ENCODE measurements at regions of chr1 and their contacts with region 1.

Region 1: GRCh38 chr1:198937231-198938031 is 298.6 kb downstream of the PTPRC start:
- DNase-seq: peak; percentile 86
- ATAC-seq: peak; percentile 83
- H3K4me3 ChIP-seq: peak overlapping the region; percentile 83
- H3K27ac ChIP-seq: peak overlapping the region; percentile 89
- H3K4me1 ChIP-seq: peaks cover 26% of the 10 kb centered on the region
- H3K27me3 ChIP-seq: no peaks in the 10 kb centered on the region
- CTCF ChIP-seq: no peak

Region 2: GRCh38 chr1:198837278-198838021 is 100.0 kb before region 1 on chr1:
- CTCF ChIA-PET with region 1: no interaction called
- POLR2A ChIA-PET with region 1: interaction called, 3 read pairs
- intact Hi-C with region 1: loop called (anchors 5 kb)
- DNase-seq: peak; percentile 18
- ATAC-seq: peak; percentile 87
- H3K4me3 ChIP-seq: no peak overlapping the region
- H3K27ac ChIP-seq: peak overlapping the region; percentile 55
- H3K4me1 ChIP-seq: peaks cover 18% of the 10 kb centered on the region
- H3K27me3 ChIP-seq: no peaks in the 10 kb centered on the region
- CTCF ChIP-seq: no peak

Region 3: GRCh38 chr1:198892065-198892464 is 45.4 kb before region 1 on chr1:
- CTCF ChIA-PET with region 1: no interaction called
- POLR2A ChIA-PET with region 1: interaction called, 13 read pairs
- intact Hi-C with region 1: loop called (anchors 5 kb)
- DNase-seq: peak; percentile 19
- ATAC-seq: peak; percentile 55
- H3K4me3 ChIP-seq: no peak overlapping the region
- H3K27ac ChIP-seq: no peak overlapping the region
- H3K4me1 ChIP-seq: peaks cover 15% of the 10 kb centered on the region
- H3K27me3 ChIP-seq: no peaks in the 10 kb centered on the region
- CTCF ChIP-seq: no peak

Region 4: GRCh38 chr1:198948895-198949659 is 11.6 kb after region 1 on chr1:
- CTCF ChIA-PET with region 1: no interaction called
- POLR2A ChIA-PET with region 1: no interaction called
- intact Hi-C with region 1: no loop called
- DNase-seq: no peak
- ATAC-seq: no peak
- H3K4me3 ChIP-seq: no peak overlapping the region
- H3K27ac ChIP-seq: no peak overlapping the region
- H3K4me1 ChIP-seq: no peaks in the 10 kb centered on the region
- H3K27me3 ChIP-seq: no peaks in the 10 kb centered on the region
- CTCF ChIP-seq: no peak

Region 5: GRCh38 chr1:198959676-198960075 is 22.2 kb after region 1 on chr1:
- CTCF ChIA-PET with region 1: no interaction called
- POLR2A ChIA-PET with region 1: no interaction called
- intact Hi-C with region 1: no loop called
- DNase-seq: no peak
- ATAC-seq: no peak
- H3K4me3 ChIP-seq: no peak overlapping the region
- H3K27ac ChIP-seq: no peak overlapping the region
- H3K4me1 ChIP-seq: no peaks in the 10 kb centered on the region
- H3K27me3 ChIP-seq: no peaks in the 10 kb centered on the region
- CTCF ChIP-seq: no peak

Region 6: GRCh38 chr1:198970912-198971311 is 33.5 kb after region 1 on chr1:
- CTCF ChIA-PET with region 1: no interaction called
- POLR2A ChIA-PET with region 1: no interaction called
- intact Hi-C with region 1: loop called (anchors 2 kb)
- DNase-seq: peak; percentile 80
- ATAC-seq: peak; percentile 97
- H3K4me3 ChIP-seq: no peak overlapping the region
- H3K27ac ChIP-seq: no peak overlapping the region
- H3K4me1 ChIP-seq: peaks cover 11% of the 10 kb centered on the region
- H3K27me3 ChIP-seq: no peaks in the 10 kb centered on the region
- CTCF ChIP-seq: no peak

Region 7: GRCh38 chr1:199002661-199003060 is 65.2 kb after region 1 on chr1:
- CTCF ChIA-PET with region 1: no interaction called
- POLR2A ChIA-PET with region 1: no interaction called
- intact Hi-C with region 1: no loop called
- DNase-seq: no peak
- ATAC-seq: no peak
- H3K4me3 ChIP-seq: no peak overlapping the region
- H3K27ac ChIP-seq: no peak overlapping the region
- H3K4me1 ChIP-seq: no peaks in the 10 kb centered on the region
- H3K27me3 ChIP-seq: no peaks in the 10 kb centered on the region
- CTCF ChIP-seq: no peak

Region 8: DNA sequence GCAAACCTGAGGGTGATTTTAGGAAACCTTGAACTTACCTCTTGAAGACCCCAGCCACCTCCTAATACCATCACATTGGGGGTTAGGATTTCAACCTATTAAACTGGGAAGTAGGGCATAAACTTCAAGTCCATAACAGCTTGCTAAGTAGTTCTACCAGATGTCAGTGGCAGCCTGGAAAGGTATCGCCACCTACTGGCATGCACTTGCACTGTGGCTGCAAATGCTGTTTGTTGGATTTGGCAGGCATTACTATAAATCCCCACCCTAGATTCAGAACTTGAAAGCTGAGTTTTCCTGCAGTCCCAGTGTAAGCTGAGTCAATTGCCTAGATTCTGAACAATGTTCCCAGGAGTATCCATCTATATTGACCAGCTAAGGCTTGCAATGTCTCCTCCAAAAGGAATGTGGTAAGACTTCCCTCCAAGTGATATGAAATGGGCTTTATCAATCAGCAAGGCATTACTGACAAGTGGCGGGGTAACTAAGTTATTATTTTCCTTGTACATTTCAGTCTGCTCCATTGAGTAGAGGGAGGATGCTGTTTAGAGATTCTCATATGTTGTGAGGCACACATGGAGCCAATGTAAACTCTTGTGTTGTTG is 175.9 kb after region 1 on chr1:
- CTCF ChIA-PET with region 1: no interaction called
- POLR2A ChIA-PET with region 1: no interaction called
- intact Hi-C with region 1: loop called (anchors 5 kb)
- DNase-seq: peak; percentile 73
- ATAC-seq: peak; percentile 73
- H3K4me3 ChIP-seq: no peak overlapping the region
- H3K27ac ChIP-seq: no peak overlapping the region
- H3K4me1 ChIP-seq: no peaks in the 10 kb centered on the region
- H3K27me3 ChIP-seq: no peaks in the 10 kb centered on the region
- CTCF ChIP-seq: peak; percentile 82

Measured in PC-3 (cell line).